ENCODE measurements at regions of chr5 and their contacts with region 1.

Region 1: DNA sequence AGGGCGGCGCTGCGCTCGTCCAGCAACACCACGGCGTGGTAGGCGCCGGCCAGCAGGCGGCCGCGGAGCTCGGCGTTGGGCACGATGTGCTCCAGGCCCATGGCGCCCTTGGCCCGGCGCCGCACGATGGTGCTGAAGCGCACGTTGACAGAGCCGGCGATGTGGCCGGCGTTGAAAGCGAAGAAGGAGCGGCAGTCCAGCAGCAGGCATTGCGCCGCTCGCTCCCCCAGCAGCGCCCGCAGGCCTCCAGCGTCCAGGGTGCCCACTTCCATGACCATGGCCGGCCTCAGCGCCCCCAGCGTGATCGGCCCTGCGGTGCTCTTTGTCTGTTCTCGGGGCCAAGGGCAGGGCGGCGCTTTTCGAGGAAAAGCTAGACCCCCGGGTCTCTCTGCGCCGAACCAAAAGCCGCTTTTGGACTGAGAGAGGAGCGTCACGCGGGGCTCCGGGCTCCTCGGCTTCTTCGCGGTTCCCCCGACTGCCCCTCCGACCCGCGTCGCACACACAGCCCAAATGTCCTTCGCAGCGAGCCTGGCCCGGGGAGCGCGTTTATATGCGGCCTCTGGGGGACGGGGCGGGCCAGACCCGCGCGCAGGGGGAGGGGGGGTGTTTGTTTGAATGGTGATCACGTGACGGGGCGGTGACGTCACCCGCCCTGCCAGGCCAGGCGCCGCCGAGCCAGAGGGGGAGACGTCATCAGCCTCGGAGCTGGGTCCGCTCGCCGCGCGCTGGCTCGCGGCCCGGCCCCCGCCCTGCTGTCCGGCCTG is at the start of gene DUSP1:
- DNase-seq: peak; percentile 97
- H3K4me3 Mint-ChIP-seq: peak within 1 kb of the TSS; percentile 89
- H3K27ac Mint-ChIP-seq: peak within 1 kb of the TSS; percentile 92
- H3K4me1 Mint-ChIP-seq: peaks cover 65% of the 10 kb centered on the region
- H3K27me3 Mint-ChIP-seq: no peaks in the 10 kb centered on the region
- total RNA-seq, gene DUSP1: 10.6 to 10.7 TPM

Region 2: GRCh38 chr5:172179361-172179989 is 591.4 kb before region 1 on chr5:
- CTCF ChIA-PET with region 1: no interaction called
- POLR2A ChIA-PET with region 1: no interaction called
- intact Hi-C with region 1: loop called (anchors 5 kb)
- DNase-seq: peak; percentile 67
- H3K4me3 Mint-ChIP-seq: peak overlapping the region; percentile 73
- H3K27ac Mint-ChIP-seq: peak overlapping the region; percentile 99
- H3K4me1 Mint-ChIP-seq: peaks cover 88% of the 10 kb centered on the region
- H3K27me3 Mint-ChIP-seq: no peaks in the 10 kb centered on the region

Region 3: GRCh38 chr5:172594867-172595466 is 175.9 kb before region 1 on chr5:
- CTCF ChIA-PET with region 1: no interaction called
- POLR2A ChIA-PET with region 1: no interaction called
- intact Hi-C with region 1: no loop called
- DNase-seq: no peak
- H3K4me3 Mint-ChIP-seq: no peak overlapping the region
- H3K27ac Mint-ChIP-seq: no peak overlapping the region
- H3K4me1 Mint-ChIP-seq: no peaks in the 10 kb centered on the region
- H3K27me3 Mint-ChIP-seq: no peaks in the 10 kb centered on the region

Region 4: DNA sequence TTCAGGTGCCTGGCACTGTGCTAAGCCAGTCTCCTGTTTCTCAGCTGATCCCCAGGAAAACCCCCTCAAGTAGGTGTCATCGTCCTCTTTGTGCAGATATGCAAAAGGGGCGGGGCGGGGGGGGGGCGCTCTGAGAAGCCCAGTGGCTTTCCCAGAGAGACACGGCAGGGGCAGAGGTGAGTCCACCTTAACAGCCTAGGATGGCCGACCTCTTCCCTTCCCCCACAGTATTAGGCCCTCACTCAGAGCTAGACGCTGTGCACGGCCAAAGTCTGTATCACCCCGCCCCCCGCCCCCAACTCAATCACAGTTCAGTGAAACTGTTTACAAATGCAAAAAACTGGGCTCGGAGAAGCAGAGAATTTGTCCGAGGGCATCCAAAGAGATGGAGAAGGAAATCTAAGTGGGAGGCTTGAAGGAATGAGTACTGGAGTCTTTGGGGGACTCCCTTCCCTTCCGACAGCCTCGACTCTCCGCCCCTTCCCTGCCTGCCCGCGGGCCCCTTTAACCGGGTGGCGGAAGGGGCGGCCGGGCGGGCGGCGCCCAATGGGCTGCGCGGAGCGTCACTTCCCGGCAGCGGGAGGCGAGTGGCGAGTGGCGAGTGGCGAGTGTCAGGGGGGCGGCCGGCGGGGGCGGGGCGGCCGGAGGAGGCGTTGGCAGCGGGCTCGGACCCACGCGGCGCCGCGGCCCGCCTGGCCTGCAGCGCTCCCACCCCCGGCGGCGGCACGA is 63.0 kb after region 1 on chr5 and contains the start of gene ERGIC1:
- CTCF ChIA-PET with region 1: interaction called, 3 read pairs
- POLR2A ChIA-PET with region 1: interaction called, 11 read pairs
- intact Hi-C with region 1: loop called (anchors 2 kb)
- DNase-seq: peak; percentile 82
- H3K4me3 Mint-ChIP-seq: peak within 1 kb of the TSS; percentile 83
- H3K27ac Mint-ChIP-seq: peak within 1 kb of the TSS; percentile 81
- H3K4me1 Mint-ChIP-seq: peaks cover 41% of the 10 kb centered on the region
- H3K27me3 Mint-ChIP-seq: no peaks in the 10 kb centered on the region
- total RNA-seq, gene ERGIC1: 41.9 to 42.7 TPM

Region 5: DNA sequence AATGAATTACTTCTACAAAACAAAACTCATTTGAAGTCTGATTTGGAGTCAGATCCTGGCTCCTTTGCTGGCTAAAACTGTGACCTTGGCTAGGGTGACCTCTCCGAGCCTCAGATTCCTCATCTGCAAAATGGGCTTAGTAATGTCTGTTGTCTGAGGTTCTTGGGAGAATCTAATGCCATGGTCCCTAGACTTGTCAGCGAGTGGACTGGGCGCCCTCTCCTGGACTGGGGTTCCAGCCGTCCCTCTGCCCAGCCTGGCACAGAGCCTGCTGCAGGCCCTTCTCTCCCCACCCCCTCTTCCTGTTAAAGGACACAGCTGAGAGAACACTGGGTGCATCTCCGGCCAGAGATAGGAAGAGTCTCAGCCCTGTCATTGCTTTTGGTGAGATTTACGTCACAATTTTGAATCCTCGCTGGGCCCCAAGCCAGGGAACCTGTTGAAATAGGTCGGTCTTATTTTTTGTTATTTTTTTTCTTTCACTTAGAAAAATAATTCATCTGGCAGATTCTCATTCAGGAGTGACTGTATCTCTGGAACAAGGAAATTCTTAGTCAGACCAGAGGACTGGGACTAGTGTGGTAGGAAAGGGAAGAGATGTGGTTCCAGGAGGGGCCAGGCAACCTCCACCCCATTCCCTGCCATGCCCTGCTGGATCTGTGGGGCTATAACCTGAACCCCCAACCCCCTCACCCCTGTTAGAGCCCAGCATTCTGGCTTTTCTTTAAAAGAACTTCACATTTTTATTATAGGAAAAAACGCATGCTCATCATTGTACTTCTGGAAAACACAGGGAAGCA is 140.2 kb after region 1 on chr5:
- CTCF ChIA-PET with region 1: no interaction called
- POLR2A ChIA-PET with region 1: no interaction called
- intact Hi-C with region 1: no loop called
- DNase-seq: peak; percentile 56
- H3K4me3 Mint-ChIP-seq: no peak overlapping the region
- H3K27ac Mint-ChIP-seq: no peak overlapping the region
- H3K4me1 Mint-ChIP-seq: peaks cover 8% of the 10 kb centered on the region
- H3K27me3 Mint-ChIP-seq: no peaks in the 10 kb centered on the region

Region 6: DNA sequence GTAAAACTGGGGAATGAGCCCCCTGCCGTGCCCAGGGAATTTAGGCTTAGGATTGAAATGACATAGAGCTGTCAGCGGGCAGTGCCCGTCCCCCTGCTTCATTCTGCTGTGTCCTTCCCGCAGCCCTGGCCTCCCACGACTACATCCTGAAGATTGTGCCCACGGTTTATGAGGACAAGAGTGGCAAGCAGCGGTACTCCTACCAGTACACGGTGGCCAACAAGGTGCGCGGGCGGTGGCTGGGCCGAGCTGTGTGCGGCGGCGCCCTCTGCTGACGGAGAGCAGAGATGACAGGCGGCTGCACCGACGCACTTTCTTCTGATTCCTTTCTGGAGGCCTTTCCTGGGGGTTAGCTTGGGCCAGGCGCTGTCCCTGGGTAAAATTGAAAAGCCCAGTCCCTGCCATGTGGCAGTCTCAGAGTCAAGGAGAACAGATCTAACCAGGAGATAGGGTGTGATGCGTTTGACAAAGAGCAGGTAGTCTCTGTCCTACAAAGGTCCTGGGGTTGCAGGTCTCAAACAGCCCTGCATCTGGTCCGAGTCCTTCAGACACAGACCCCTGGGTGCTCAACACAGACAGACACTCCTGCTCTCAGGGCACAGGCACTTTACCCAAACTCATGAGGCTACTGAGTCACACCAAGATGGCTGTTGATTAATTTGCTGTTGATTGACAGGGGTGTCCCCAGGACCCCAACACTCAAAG is 161.6 kb after region 1 on chr5:
- CTCF ChIA-PET with region 1: interaction called, 18 read pairs
- POLR2A ChIA-PET with region 1: no interaction called
- intact Hi-C with region 1: loop called (anchors 1 kb)
- DNase-seq: peak; percentile 82
- H3K4me3 Mint-ChIP-seq: no peak overlapping the region
- H3K27ac Mint-ChIP-seq: no peak overlapping the region
- H3K4me1 Mint-ChIP-seq: peaks cover 6% of the 10 kb centered on the region
- H3K27me3 Mint-ChIP-seq: no peaks in the 10 kb centered on the region

Region 7: GRCh38 chr5:173057062-173057924 is 286.4 kb after region 1 on chr5:
- CTCF ChIA-PET with region 1: no interaction called
- POLR2A ChIA-PET with region 1: no interaction called
- intact Hi-C with region 1: loop called (anchors 1 kb)
- DNase-seq: peak; percentile 100
- H3K4me3 Mint-ChIP-seq: peak overlapping the region; percentile 97
- H3K27ac Mint-ChIP-seq: peak overlapping the region; percentile 97
- H3K4me1 Mint-ChIP-seq: peaks cover 44% of the 10 kb centered on the region
- H3K27me3 Mint-ChIP-seq: no peaks in the 10 kb centered on the region